GM12878 (cell line): ENCODE measurements at regions of chr10 and their contacts with region 1.

Region 1: DNA sequence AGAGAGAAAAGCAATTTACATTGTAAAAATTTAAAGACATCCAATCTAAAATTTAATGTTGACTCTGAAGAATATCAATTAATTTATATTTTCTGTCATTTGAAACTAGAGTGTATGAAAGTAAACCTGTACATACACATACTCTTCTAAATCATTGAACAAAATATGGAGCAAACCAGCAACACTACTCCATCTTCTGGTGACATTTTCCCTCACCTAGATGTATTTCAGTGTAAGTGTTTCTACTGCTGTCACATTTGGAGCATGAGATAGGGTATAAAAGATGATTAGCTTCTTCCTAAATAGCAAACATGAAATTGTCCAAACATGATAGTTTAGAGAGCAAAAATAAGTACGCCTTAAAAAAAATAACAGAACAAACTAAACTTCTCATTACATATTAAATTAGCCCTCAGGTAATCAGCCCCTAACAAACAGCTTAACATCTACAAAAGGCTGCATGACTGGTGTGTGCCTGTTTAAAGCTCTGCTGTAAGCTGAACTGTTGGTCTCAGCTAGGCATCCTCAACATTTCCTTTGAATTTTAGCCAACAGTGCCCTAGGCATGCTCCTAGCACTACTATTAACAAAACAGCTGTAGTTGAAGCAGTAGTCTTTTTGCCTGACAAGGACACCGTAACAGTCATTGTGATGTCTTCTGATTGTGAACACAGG is 189.8 kb downstream of the CTNNA3 start:
- DNase-seq: no peak
- ATAC-seq: no peak
- H3K4me3 ChIP-seq: no peak overlapping the region
- H3K27ac ChIP-seq: no peak overlapping the region
- H3K4me1 ChIP-seq: no peaks in the 10 kb centered on the region
- H3K27me3 ChIP-seq: no peaks in the 10 kb centered on the region
- CTCF ChIP-seq: no peak
- EP300 ChIP-seq: no peak
- POLR2A ChIP-seq: no peak
- RAD21 ChIP-seq: no peak

Region 2: GRCh38 chr10:67492317-67493019 is 13.8 kb before region 1 on chr10:
- CTCF ChIA-PET with region 1: interaction called, 6 read pairs
- POLR2A ChIA-PET with region 1: no interaction called
- RAD21 ChIA-PET with region 1: interaction called, 8 read pairs
- SMC1A ChIA-PET with region 1: interaction called, 18 read pairs
- in situ Hi-C with region 1: no loop called
- intact Hi-C with region 1: no loop called
- DNase-seq: no peak
- ATAC-seq: peak; percentile 26; the same call in 1 of the 3 replicates
- H3K4me3 ChIP-seq: no peak overlapping the region
- H3K27ac ChIP-seq: no peak overlapping the region
- H3K4me1 ChIP-seq: no peaks in the 10 kb centered on the region
- H3K27me3 ChIP-seq: no peaks in the 10 kb centered on the region
- CTCF ChIP-seq: no peak
- EP300 ChIP-seq: no peak
- POLR2A ChIP-seq: no peak
- RAD21 ChIP-seq: no peak

Region 3: DNA sequence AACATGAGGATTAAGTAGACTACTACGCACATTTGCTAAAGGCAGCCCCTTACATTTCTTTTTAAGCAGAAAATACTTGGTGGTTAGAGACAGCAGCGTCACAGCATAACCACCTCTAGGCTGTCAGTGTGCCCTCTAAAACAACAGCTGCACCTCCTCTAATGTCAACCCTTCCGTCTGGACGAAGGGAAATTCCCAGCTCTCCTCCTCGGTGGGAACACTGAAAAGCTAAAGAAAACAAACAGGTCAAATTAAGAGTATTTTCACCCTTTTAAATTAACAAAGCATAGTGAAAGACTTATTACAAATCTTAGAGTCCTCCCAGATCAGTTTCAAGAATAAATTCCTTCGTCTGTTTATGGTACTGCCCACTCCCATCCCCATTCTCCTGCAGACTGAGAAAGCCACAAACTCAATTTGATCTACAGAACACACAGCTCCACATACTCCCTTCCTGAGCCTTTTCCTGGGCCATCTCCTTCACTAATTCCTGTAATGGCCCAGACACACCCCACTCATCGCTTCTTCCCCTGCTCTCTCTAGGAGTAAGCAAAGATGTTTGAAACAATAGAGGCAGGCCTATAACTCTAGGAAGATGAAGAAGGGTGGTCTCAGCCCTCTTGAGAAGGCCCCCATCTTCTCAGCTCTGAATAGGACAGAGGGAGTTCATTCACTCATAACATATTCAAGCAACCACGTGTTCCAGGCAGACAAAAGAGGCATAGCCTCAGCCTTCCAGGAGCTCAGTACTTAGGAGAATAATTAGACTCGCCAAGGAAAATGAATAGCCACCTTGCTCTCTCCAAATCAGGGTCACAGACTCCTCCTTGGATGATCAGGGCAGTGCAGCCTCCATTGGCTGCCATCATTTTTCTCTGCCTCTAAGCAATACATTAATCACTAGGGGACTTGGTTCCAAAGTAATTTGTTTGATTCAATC is 778.1 kb after region 1 on chr10:
- CTCF ChIA-PET with region 1: no interaction called
- POLR2A ChIA-PET with region 1: no interaction called
- RAD21 ChIA-PET with region 1: no interaction called
- SMC1A ChIA-PET with region 1: no interaction called
- in situ Hi-C with region 1: no loop called
- intact Hi-C with region 1: no loop called
- DNase-seq: no peak
- ATAC-seq: no peak
- H3K4me3 ChIP-seq: no peak overlapping the region
- H3K27ac ChIP-seq: no peak overlapping the region
- H3K4me1 ChIP-seq: no peaks in the 10 kb centered on the region
- H3K27me3 ChIP-seq: no peaks in the 10 kb centered on the region
- CTCF ChIP-seq: no peak
- EP300 ChIP-seq: no peak
- POLR2A ChIP-seq: no peak
- RAD21 ChIP-seq: no peak